HEK293 (cell line): ENCODE measurements at regions of chr1 and their contacts with region 1.

Region 1: DNA sequence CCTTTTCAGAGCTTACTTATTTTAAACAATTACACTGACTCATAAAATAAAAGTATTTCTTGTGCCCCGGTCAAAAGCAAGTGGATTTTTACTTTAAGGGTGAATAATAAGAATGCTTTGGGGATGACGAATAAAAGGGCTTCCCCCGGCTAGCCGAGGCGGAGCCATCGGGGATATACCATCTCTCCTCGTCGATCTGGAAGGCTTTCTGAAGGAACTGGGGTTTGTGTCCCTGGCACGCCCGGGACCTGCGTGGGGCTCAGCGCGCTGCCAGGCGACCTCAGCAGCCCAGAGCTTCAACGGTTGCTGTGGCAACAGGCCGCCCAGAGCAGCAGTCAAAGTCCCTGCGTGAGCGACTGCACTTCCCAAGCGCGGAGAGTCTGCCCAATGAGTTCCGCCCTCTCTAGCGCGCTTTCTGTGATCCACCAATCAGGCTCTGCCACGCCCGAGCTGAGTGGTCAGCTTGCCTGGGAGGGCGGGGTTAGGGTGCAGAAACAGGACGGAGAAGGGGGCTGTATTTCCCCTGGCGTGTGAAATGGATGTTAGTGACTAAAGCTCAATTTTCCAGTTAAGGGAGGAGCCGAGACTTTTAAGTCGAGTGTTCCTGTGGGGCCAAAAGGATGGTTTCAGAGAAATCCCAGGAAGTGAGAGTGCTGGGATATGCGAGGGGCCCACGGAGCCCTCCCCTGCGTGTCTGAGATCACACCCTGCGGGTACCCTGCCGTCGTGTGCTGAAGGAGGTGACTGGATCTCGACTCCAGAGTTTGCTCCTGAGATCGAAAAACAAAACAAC is 33.0 kb upstream of the MGST3 start:
- H3K4me3 ChIP-seq: peak overlapping the region; percentile 60
- H3K27ac ChIP-seq: no peak overlapping the region; the same call in 1 of the 2 replicates
- H3K4me1 ChIP-seq: no peaks in the 10 kb centered on the region
- CTCF ChIP-seq: no peak

Region 2: DNA sequence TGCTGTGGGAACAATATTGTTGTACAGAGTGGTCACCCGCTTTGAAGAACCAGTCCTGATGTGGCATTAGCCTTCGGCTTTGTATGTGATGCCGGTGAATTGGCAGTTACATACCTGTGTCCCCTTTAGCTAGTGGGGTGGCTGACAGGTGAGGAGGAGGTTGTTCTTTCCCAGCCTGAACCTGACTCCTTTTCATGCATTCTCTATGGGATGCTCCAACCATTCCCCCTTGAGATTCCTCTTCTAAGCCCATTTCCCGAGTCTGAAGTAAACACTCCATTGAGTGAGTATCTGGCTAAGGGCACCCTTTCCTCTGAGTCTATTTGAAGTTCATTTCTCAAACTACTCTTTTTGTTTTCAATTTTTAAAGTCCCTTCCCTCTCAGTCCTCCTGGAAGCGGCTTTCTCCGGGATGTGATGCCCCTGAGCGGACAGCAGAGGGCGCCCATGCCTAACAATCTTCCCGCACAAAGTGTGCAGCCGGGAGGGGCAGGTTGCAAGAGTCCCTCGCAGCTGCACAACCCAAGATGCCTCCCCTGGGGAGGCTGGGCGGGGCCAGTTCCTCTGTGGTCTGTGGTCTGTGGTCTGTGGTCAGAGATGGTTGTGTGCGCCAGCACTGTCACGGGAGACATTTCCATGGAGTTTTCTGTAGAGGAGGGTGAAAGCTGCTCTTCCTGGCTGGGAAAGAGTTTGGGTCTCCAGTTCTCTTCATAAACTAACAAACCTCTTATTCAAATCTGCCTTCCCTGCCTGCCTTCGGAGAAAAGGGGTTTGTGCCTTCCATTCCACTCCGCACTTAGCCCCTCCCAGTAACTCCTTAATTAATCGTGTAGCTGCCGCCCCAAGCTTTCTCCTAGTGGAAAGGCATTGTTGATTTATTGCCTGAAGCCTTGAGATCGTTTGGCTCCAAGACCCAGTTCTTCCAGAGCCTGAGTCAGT is 205.2 kb before region 1 on chr1:
- CTCF ChIA-PET with region 1: interaction called, 108 read pairs
- POLR2A ChIA-PET with region 1: interaction called, 7 read pairs
- H3K4me3 ChIP-seq: peak overlapping the region; percentile 28
- H3K27ac ChIP-seq: no peak overlapping the region
- H3K4me1 ChIP-seq: no peaks in the 10 kb centered on the region
- CTCF ChIP-seq: peak; percentile 91

Region 3: GRCh38 chr1:165575468-165576099 is 22.5 kb before region 1 on chr1:
- CTCF ChIA-PET with region 1: interaction called, 13 read pairs
- POLR2A ChIA-PET with region 1: no interaction called
- H3K4me3 ChIP-seq: no peak overlapping the region
- H3K27ac ChIP-seq: no peak overlapping the region
- H3K4me1 ChIP-seq: no peaks in the 10 kb centered on the region
- CTCF ChIP-seq: no peak

Region 4: DNA sequence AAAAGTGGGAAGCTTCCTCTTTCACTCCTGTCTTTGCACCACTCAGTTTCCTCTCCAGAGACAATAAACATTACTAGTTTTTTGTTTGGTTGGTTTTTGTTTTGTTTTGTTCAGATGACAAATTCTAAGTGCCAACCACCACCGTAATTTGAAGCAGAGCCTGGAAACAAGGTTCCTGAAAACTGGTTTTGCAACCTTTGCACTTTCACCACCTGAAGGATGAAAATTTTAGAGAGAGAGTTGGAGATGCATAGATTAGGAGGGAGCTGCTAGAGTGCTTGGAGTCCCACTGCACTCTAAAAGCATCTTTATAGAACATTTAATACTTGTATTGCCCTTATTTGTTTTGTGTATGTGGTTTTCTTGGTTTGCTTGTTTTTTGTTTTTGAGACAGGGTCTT is 12.8 kb after region 1 on chr1:
- CTCF ChIA-PET with region 1: interaction called, 17 read pairs
- POLR2A ChIA-PET with region 1: no interaction called
- H3K4me3 ChIP-seq: no peak overlapping the region
- H3K27ac ChIP-seq: no peak overlapping the region
- H3K4me1 ChIP-seq: no peaks in the 10 kb centered on the region
- CTCF ChIP-seq: no peak

Region 5: DNA sequence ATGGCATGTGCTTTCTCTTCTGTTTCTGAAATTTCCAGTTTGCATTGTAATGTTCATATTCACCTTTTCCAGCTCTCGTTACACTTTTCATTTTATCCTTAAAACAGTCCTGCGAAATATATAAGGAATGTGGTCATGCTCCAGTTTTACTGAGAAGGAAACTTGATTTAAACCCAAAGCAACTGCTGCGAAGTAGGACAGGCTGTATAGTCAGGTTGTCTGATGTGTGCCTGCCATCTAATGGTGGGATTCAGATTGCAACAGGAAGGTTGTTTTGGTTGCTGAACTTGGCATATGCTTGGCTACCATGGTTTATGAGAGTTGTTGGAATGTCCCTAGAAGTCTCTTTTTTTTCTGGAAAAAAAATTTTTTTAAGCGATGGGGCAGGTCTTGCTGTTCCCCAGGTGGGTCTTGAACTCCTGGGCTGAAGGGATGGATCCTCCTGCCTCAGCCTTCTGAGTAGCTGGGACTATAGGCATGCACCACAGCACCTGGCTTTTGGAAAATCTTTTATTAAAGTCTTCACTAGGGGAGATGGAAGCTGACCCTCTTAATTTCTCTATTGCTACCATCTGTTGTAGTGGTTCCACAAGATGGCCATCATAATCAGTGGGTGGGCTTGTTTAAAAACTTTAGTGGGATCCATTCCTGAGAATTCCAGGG is 316.2 kb after region 1 on chr1:
- CTCF ChIA-PET with region 1: interaction called, 75 read pairs
- POLR2A ChIA-PET with region 1: no interaction called
- H3K4me3 ChIP-seq: no peak overlapping the region
- H3K27ac ChIP-seq: no peak overlapping the region
- H3K4me1 ChIP-seq: no peaks in the 10 kb centered on the region
- CTCF ChIP-seq: peak; percentile 80